Activated CD8-positive, alpha-beta T cell treated with anti-CD3 and anti-CD28 coated beads for 36 hours (primary cell): ENCODE measurements at regions of chr12 and their contacts with region 1.

Region 1: GRCh38 chr12:1594261-1595025 is at the start of gene FBXL14:
- DNase-seq: peak; percentile 92
- ATAC-seq: peak; percentile 64
- H3K4me3 Mint-ChIP-seq: peak within 1 kb of the TSS; percentile 95
- H3K27ac Mint-ChIP-seq: peak within 1 kb of the TSS; percentile 88
- H3K4me1 Mint-ChIP-seq: peaks cover 29% of the 10 kb centered on the region
- H3K27me3 Mint-ChIP-seq: no peaks in the 10 kb centered on the region
- CTCF ChIP-seq: no peak
- total RNA-seq, gene FBXL14: 23.3 to 25.1 TPM

Region 2: GRCh38 chr12:1533602-1534304 is 60.7 kb before region 1 on chr12:
- CTCF ChIA-PET with region 1: interaction called, 17 read pairs
- POLR2A ChIA-PET with region 1: no interaction called
- intact Hi-C with region 1: loop called (anchors 5 kb)
- DNase-seq: peak; percentile 80
- ATAC-seq: peak; percentile 84
- H3K4me3 Mint-ChIP-seq: peak overlapping the region; percentile 62
- H3K27ac Mint-ChIP-seq: no peak overlapping the region
- H3K4me1 Mint-ChIP-seq: peaks cover 32% of the 10 kb centered on the region
- H3K27me3 Mint-ChIP-seq: peaks cover 69% of the 10 kb centered on the region
- CTCF ChIP-seq: peak; percentile 9

Region 3: GRCh38 chr12:1605129-1606020 is 10.9 kb after region 1 on chr12:
- CTCF ChIA-PET with region 1: interaction called, 25 read pairs
- POLR2A ChIA-PET with region 1: interaction called, 27 read pairs
- intact Hi-C with region 1: no loop called
- DNase-seq: peak; percentile 67
- ATAC-seq: peak; percentile 68
- H3K4me3 Mint-ChIP-seq: peak overlapping the region; percentile 68
- H3K27ac Mint-ChIP-seq: peak overlapping the region; percentile 73
- H3K4me1 Mint-ChIP-seq: peaks cover 33% of the 10 kb centered on the region
- H3K27me3 Mint-ChIP-seq: peaks cover 1% of the 10 kb centered on the region
- CTCF ChIP-seq: peak; percentile 83